GM10248 (cell line): ENCODE measurements at regions of chr4 and their contacts with region 1.

Region 1: DNA sequence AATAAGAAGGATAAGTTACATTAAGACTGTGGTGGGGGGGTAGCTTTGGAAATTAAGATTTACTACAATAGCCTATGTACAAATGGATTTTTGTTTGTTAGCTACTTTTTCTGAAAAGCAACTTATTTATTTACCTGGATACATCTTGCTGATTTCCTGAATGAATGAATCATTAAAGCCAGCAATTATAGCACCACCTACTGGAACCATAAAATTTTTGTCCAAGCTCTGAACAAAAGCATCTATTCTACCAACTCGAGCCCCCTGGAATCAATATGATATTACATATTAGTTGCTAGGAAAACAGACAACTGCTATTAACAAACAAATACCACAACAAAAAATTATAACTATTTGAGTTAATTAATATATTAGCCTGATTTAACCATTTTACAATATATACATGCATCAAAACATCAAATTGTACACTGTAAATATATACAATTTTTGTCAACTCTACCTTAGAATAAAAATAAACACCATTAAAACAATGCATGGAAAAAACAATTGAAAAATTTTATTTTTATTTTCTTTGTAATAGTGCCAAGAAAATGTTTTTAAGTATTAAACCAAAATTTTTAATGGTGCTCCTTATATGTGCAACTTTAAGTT is 15.3 kb downstream of the SEPSECS start:
- DNase-seq: peak; percentile 30
- CTCF ChIP-seq: peak; percentile 53

Region 2: GRCh38 chr4:25060963-25061340 is 84.0 kb before region 1 on chr4:
- CTCF ChIA-PET with region 1: no interaction called
- POLR2A ChIA-PET with region 1: no interaction called
- DNase-seq: no peak
- CTCF ChIP-seq: no peak

Region 3: GRCh38 chr4:25129917-25130316 is 15.1 kb before region 1 on chr4:
- CTCF ChIA-PET with region 1: interaction called, 15 read pairs
- POLR2A ChIA-PET with region 1: no interaction called
- DNase-seq: no peak
- CTCF ChIP-seq: no peak